ENCODE measurements at regions of chr2 and their contacts with region 1.

Region 1: DNA sequence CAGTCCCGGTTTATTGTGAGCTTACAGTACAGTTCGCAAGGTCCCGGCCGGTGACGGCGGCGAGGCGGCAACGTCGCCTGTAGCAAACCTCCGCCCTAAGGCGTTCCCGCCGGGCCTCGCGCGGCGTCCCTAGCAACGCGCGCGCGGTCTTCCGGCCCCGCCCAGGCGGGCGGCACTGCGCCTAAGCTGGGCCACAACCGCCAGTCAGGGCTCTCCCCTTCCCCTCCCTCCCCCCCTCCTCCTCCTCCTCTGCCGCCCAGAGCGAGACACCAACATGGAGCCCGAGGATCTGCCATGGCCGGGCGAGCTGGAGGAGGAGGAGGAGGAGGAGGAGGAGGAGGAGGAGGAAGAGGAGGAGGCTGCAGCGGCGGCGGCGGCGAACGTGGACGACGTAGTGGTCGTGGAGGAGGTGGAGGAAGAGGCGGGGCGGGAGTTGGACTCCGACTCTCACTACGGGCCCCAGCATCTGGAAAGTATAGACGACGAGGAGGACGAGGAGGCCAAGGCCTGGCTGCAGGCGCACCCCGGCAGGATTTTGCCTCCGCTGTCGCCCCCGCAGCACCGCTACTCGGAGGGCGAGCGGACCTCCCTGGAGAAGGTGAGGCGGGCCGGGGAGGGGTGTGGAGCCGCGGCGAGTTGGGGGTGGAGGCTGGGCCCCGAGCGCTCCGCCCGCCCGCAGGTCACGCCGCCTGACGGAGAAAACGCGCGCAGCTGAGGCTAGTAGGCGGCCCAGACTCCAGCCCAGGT is at the start of gene ALMS1:
- DNase-seq: peak; percentile 91 to 94
- H3K4me3 ChIP-seq: peak within 1 kb of the TSS; percentile 78 to 81
- H3K27ac ChIP-seq: peak within 1 kb of the TSS; percentile 86 to 93
- H3K4me1 ChIP-seq: peaks cover 0 to 20% (median 10%) of the 10 kb centered on the region in 4 donors
- H3K27me3 ChIP-seq: no peaks in the 10 kb centered on the region
- CTCF ChIP-seq: peak; percentile 27 to 37

Region 2: DNA sequence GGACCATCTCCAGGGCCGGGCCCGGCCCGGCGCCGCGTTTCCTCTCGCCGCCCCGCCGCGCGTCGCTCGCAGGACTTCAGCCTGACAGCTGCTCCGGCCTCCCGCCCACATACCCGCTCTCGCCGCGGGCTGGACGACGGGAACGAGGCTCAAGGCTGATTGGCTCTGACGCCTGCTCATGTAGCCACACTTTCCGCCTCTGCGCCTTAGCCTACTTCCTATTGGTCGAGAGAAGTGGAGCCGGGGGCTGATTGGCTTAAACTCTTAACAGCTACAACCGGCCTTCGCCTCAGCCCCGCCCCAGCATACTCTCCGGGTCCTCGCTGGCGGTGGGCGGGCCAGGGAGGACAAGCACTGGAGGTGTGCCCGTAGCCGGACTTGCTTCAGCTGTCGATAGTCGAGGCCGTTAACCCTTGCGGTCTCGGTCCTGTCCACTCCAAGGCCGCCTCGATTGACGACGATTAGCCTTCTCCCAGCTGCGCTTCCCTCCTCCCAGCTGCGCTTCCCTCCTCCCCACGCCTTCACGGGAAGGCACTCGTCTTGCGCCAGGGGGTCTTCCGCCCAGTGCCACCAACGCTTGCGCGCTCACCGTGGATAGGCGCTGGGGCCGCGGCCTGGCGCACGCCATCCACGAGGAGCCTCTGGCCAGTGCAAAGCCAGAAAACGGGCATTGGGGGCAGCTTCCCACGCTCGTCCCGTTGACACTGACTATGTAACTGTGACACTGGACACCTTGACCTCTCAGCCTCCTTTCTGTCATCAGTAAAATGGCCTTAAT is 152.4 kb before region 1 on chr2 and contains the start of gene PRADC1:
- intact Hi-C with region 1: loop called (anchors 10 kb)
- DNase-seq: peak; percentile 99 to 100
- H3K4me3 ChIP-seq: peak within 1 kb of the TSS; percentile 69 to 86
- H3K27ac ChIP-seq: peak within 1 kb of the TSS; percentile 90 to 92
- H3K4me1 ChIP-seq: peaks cover 0 to 38% (median 27%) of the 10 kb centered on the region in 4 donors
- H3K27me3 ChIP-seq: no peaks in the 10 kb centered on the region
- CTCF ChIP-seq: no peak